ENCODE measurements at regions of chr12 and their contacts with region 1.

Region 1: DNA sequence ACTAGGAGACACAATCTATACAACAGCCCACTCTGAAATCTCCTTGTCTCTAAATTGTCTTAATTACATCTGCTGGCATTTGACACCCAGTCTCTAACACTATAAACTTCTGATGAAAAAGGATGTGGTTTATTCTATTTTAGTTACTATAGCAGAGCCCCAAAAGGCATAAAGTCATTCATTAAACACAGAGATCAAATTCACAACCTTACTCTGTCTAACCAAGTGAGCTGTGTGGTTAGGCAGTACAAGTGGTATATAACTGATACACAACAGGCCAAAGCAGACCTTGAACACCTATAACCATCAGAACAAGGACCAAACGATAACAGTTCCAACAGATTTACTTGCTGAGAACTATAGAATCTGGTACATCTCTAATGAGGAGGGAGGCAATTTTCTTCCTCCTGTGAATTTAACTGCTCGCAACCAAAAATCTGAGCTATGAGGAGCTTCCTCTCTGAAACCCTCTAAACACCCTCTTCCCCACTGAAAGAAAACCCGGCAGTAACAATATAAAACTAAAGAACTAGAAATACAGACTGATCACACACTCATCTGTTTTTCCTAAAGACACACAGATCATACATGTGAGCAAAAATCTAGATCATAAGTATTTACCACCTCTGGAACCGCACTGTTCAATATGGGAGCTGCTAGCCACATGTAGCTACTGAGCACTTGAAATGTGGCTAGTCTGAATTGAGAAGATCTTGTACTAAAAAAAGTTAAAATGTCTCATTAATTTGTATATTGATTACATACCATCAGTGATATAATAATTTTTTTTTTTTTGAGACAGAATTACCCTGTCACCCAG is 17.7 kb downstream of the SPPL3 start:
- DNase-seq: no peak
- H3K27ac ChIP-seq: no peak overlapping the region
- CTCF ChIP-seq: no peak

Region 2: DNA sequence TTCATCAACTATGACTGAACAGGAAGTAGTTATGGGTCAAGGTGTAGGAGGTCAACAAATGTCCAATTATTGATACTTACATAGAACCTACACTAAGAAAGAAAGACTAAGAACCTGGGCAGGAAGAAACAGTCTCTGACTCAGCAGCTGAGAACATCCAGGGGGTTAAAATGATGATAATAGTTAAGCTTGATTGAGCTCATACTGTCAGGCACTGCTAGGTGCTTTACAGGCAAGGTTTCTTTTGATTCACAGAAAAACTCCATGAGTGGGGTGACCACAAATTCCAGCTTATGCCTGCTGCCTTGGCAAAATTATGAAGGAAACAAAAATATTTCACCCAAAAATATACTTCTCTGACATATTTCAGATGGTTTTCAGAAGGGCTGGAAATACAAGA is 85.7 kb before region 1 on chr12:
- CTCF ChIA-PET with region 1: interaction called, 10 read pairs
- POLR2A ChIA-PET with region 1: no interaction called
- DNase-seq: no peak
- H3K27ac ChIP-seq: no peak overlapping the region
- CTCF ChIP-seq: no peak

Region 3: DNA sequence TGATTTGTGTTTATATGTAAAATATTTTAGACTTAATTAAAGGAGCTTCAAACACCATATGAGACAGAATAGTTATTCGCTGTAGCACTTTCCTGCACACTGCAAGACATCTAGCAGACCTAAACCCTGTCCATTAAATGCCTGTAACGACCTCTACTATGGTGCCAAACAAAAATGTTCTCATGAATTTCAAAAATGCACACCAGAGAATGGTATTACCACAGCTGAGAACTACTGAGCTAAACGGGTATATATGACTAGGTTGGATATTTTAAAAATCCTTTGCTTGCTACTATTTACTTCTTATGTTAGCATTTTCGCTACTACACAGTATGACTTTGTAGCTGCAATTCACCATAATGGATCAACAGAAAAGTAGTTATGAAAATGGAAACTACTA is 17.0 kb before region 1 on chr12:
- CTCF ChIA-PET with region 1: no interaction called
- POLR2A ChIA-PET with region 1: no interaction called
- DNase-seq: no peak
- H3K27ac ChIP-seq: no peak overlapping the region
- CTCF ChIP-seq: no peak

Measured in RWPE1 (cell line).